Common myeloid progenitor, CD34-positive (primary cell): ENCODE measurements at regions of chr11 and their contacts with region 1.

Region 1: DNA sequence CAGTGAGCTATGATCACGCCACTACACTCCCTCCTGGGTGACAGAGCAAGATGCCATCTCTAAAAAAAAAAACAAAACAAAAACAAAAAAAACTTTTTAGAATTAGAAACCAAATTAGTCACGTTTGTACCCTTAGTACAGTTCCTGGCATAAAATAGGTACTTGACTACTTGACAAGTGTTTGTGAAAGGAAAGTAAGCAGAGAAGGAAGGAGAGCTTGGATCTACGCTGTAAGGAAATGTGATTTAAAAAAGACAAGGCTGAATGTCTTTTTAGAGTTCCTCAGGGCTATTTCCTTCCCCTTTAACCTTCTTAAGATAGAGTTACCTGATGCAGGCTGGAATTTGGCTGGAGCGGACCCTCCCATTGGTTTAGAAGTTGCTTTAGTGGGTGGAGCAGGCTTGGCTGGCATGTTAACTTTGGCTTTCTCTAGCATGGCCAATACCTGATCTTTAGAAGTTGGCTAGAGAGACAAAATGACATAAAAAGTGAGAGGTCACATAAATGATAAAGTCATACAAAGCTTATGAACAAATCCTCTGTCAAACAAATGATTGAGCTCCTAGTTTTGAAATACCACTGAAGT is 50.7 kb downstream of the F2 start:
- DNase-seq: no peak
- H3K4me3 ChIP-seq: no peak overlapping the region
- H3K27ac ChIP-seq: no peak overlapping the region
- H3K4me1 ChIP-seq: no peaks in the 10 kb centered on the region
- H3K27me3 ChIP-seq: no peaks in the 10 kb centered on the region

Region 2: GRCh38 chr11:46759196-46759595 is 10.5 kb before region 1 on chr11:
- CTCF ChIA-PET with region 1: no interaction called
- POLR2A ChIA-PET with region 1: no interaction called
- DNase-seq: no peak
- H3K4me3 ChIP-seq: no peak overlapping the region
- H3K27ac ChIP-seq: no peak overlapping the region
- H3K4me1 ChIP-seq: peaks cover 8 to 22% (median 13%) of the 10 kb centered on the region in 4 experiments
- H3K27me3 ChIP-seq: no peaks in the 10 kb centered on the region

Region 3: DNA sequence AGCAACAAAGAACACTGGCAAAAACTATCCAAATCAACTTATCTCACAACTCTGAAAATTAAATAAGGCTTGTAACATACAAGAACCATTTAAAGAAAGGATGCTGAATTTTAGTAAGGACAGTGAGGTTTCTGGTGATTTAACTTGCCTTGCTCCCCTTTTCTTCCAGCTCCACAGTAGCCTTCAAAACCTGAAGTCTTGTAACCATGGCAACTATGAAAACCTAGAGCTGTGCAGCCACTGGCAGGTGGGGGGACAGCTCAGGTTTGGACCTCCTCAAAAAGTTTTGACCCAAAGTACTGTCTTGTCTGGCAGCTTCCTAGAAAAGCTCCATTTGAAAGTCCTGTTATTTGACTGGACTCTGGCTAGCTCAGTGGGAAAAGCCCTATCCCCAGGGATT is 16.4 kb after region 1 on chr11:
- CTCF ChIA-PET with region 1: interaction called, 10 read pairs
- POLR2A ChIA-PET with region 1: no interaction called
- DNase-seq: no peak
- H3K4me3 ChIP-seq: no peak overlapping the region
- H3K27ac ChIP-seq: no peak overlapping the region
- H3K4me1 ChIP-seq: no peaks in the 10 kb centered on the region
- H3K27me3 ChIP-seq: no peaks in the 10 kb centered on the region